A549 (cell line): ENCODE measurements at regions of chr2 and their contacts with region 1.

Region 1: GRCh38 chr2:216666461-216667233 is 28.7 kb downstream of the IGFBP5 start:
- DNase-seq: peak; percentile 68 to 72
- ATAC-seq: peak; percentile 75 to 91
- H3K4me3 ChIP-seq: no peak overlapping the region
- H3K27ac ChIP-seq: no peak overlapping the region
- H3K4me1 ChIP-seq: no peaks in the 10 kb centered on the region
- CTCF ChIP-seq: peak; percentile 94
- EP300 ChIP-seq: no peak
- POLR2A ChIP-seq: no peak
- RAD21 ChIP-seq: peak; percentile 97 to 98

Region 2: DNA sequence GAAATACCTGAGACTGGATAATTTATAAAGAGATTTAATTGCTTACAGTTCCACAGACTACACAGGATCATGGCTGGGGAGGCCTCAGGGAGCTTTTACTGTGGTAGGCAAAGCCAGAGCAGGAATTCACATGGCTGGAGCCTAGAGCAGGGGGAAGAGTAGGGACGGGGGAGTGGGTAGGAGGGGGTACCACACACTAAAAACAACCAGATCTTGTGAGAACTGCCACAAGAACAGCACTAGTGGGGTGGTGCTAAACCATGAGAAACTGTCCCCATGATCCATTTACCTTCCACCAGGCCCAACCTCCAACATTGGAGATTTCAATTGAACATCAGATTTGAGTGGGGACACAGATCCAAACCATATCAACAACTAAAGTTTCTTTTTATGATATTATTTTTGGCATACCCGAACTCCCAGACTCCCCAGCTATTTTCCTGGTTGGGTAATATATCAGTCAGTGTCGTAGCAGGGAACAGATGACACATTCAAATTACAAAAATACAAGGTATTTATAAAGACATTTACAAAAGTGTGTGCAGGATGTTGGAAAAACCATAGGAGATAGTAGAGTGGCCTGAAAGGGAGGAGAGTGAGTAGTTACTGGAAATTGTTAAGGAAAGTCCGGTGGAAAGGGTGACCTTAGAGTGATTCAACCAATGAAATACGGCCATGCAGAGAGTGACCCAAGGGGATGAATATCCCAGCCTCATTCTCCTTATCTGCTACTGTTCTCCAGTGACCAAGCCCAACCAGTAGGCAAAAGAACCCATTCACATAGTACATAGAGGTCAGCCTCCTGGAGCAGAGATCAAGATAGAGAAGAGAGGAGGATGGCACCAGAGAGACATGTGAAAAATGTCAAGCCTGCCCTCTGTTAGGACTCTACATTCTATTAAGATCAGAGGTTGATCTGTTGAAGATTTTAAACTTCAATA is 159.2 kb before region 1 on chr2:
- CTCF ChIA-PET with region 1: interaction called, 23 read pairs
- POLR2A ChIA-PET with region 1: no interaction called
- DNase-seq: no peak
- ATAC-seq: peak; percentile 31 to 35
- H3K4me3 ChIP-seq: no peak overlapping the region
- H3K27ac ChIP-seq: no peak overlapping the region
- H3K4me1 ChIP-seq: peaks cover 12% of the 10 kb centered on the region; the same call in 2 of the 3 replicates
- CTCF ChIP-seq: no peak
- EP300 ChIP-seq: no peak
- POLR2A ChIP-seq: no peak
- RAD21 ChIP-seq: no peak

Region 3: GRCh38 chr2:216619411-216620393 is 46.9 kb before region 1 on chr2:
- CTCF ChIA-PET with region 1: interaction called, 14 read pairs
- POLR2A ChIA-PET with region 1: no interaction called
- DNase-seq: no peak
- ATAC-seq: peak in 1 of 2 experiments; percentile 44; a peak in 2 of 6 replicates
- H3K4me3 ChIP-seq: no peak overlapping the region
- H3K27ac ChIP-seq: 0 out of 6 replicates have a peak overlapping the region, but pooled peaks of 1 of the 2 experiments have one; percentile 33
- H3K4me1 ChIP-seq: no peaks in the 10 kb centered on the region; the same call in 2 of the 3 replicates
- CTCF ChIP-seq: no peak
- EP300 ChIP-seq: no peak
- POLR2A ChIP-seq: no peak
- RAD21 ChIP-seq: no peak

Region 4: GRCh38 chr2:216651351-216651881 is 15.2 kb before region 1 on chr2:
- CTCF ChIA-PET with region 1: interaction called, 61 read pairs
- POLR2A ChIA-PET with region 1: no interaction called
- DNase-seq: no peak
- ATAC-seq: no peak
- H3K4me3 ChIP-seq: no peak overlapping the region
- H3K27ac ChIP-seq: no peak overlapping the region
- H3K4me1 ChIP-seq: peaks cover 18% of the 10 kb centered on the region; the same call in 2 of the 3 replicates
- CTCF ChIP-seq: no peak
- EP300 ChIP-seq: no peak
- POLR2A ChIP-seq: no peak
- RAD21 ChIP-seq: no peak

Region 5: DNA sequence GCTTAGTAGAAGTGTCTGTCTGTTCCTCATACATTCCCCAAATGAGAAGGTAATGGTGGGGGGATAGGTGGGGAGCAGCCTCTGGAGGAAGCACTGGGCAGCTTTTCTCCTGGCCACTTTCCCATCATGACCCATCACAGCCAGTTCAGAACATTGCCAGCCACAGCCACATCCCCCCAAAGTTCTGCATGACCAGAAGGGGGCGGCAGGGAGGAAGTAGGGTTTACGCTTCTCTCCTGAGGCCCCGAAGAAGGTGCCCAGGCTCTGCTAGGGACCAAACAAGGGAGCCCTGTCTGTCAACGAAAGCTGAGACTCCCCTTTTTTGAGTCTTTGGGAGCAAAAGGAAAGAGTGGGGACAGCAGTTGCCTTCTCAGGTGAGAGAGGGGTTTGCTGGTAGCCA is 21.0 kb after region 1 on chr2:
- CTCF ChIA-PET with region 1: interaction called, 17 read pairs
- POLR2A ChIA-PET with region 1: no interaction called
- DNase-seq: peak; percentile 38 to 47
- ATAC-seq: peak in 1 of 2 experiments; percentile 61; a peak in 3 of 6 replicates
- H3K4me3 ChIP-seq: no peak overlapping the region
- H3K27ac ChIP-seq: no peak overlapping the region
- H3K4me1 ChIP-seq: peaks cover 16% of the 10 kb centered on the region; the same call in 2 of the 3 replicates
- CTCF ChIP-seq: peak; percentile 37; the same call in 2 of the 3 replicates
- EP300 ChIP-seq: no peak
- POLR2A ChIP-seq: no peak
- RAD21 ChIP-seq: peak; percentile 17 to 25; a peak in 1 of 5 replicates